Activated CD4-positive, alpha-beta T cell treated with anti-CD3 and anti-CD28 coated beads, Interleukin-2, amount 10 ng/mL, durations not matched to agents 24 days and 14 days (primary cell): ENCODE measurements at regions of chr11 and their contacts with region 1.

Region 1: GRCh38 chr11:111601979-111602864 is at the start of gene SIK2:
- DNase-seq: peak; percentile 96
- H3K4me3 Mint-ChIP-seq: peak within 1 kb of the TSS; percentile 90
- H3K27ac Mint-ChIP-seq: peak within 1 kb of the TSS; percentile 90
- H3K4me1 Mint-ChIP-seq: peaks cover 26% of the 10 kb centered on the region
- H3K27me3 Mint-ChIP-seq: peaks cover 9% of the 10 kb centered on the region
- total RNA-seq, gene SIK2: 8.2 and 9.0 TPM in 2 replicates

Region 2: GRCh38 chr11:111269146-111269868 is 332.9 kb before region 1 on chr11:
- intact Hi-C with region 1: no loop called
- DNase-seq: no peak
- H3K4me3 Mint-ChIP-seq: no peak overlapping the region
- H3K27ac Mint-ChIP-seq: no peak overlapping the region
- H3K4me1 Mint-ChIP-seq: peaks cover 6% of the 10 kb centered on the region
- H3K27me3 Mint-ChIP-seq: peaks cover 11% of the 10 kb centered on the region

Region 3: DNA sequence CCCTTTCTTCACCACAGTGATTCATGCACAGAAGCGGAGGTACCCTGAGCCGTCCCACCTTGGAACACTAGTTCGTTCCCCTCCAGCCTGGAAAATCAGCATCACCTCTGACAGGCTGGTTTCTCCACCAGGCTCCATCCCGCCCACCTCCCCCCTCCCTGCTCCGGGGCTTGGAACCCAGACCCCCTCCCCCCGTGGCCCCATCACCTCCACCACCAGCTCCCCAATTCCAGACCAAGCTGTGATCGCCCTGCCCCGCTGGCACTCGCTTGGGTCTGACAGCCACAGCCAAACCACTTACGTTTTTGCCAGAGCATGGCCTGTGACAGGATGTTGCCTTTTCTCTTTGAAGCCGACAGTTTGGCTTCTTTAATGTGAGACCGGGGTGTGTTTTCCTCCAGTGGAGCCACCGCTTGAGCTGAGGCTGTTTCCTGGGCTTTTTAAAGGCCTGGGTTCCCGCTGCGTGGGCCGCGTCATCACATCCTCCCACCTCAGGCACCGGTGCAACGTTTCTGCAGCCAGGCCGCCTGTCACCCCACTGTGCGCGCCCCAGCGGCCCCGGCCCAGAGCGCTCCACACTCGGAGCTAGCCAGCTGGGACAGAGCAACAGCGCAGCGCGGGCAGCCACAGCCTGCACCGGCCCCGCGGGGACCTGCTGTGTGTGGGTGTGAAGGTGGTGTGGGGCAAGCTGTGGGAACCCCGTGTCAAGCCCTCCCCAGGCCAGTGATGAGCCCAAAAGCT is 223.2 kb before region 1 on chr11 and contains the start of gene POU2AF1:
- intact Hi-C with region 1: loop called (anchors 5 kb)
- DNase-seq: peak; percentile 92
- H3K4me3 Mint-ChIP-seq: peak within 1 kb of the TSS; percentile 93
- H3K27ac Mint-ChIP-seq: peak within 1 kb of the TSS; percentile 99
- H3K4me1 Mint-ChIP-seq: peaks cover 61% of the 10 kb centered on the region
- H3K27me3 Mint-ChIP-seq: no peaks in the 10 kb centered on the region
- total RNA-seq, gene POU2AF1: 65.6 and 68.9 TPM in 2 replicates

Region 4: DNA sequence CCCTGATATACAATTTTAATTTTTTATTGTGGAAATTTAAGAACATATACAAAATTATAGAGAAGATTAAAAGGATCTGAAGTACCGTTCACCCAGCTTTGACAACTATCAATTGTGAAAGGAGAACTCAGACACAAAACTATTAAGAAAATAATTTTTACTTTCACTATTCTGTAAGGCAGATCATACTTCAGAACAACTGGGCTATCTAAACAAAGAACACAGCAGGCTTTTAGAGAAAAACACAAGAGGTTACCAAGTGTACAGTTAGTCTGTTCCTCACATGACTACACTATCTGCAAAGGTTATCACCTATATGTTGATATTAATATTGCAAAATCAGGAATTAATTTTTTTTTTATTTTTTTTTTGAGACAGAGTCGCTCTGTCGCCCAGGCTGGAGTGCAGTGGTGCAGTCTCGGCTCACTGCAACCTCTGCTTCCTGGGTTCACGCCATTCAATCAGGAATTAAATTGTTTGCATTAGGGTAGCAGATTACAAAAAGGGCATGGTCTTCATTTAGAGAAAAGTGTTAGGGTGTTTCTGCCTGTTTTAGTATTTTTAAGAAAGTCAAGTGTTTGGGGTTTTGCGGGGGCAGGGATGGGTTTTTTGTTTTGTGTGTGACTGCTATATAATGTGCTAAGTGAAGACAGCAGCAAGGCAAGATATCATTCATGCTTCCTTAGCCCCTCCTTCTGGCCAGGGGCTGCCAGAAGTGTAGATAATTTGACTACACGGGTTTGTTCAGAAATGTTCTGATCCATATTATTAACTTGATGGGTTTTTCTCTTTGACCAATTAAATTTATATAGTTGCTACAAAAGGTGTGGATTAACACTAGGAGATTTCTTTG is 27.6 kb before region 1 on chr11:
- intact Hi-C with region 1: no loop called
- DNase-seq: no peak
- H3K4me3 Mint-ChIP-seq: peak overlapping the region; percentile 14
- H3K27ac Mint-ChIP-seq: no peak overlapping the region
- H3K4me1 Mint-ChIP-seq: peaks cover 3% of the 10 kb centered on the region
- H3K27me3 Mint-ChIP-seq: peaks cover 14% of the 10 kb centered on the region

Region 5: DNA sequence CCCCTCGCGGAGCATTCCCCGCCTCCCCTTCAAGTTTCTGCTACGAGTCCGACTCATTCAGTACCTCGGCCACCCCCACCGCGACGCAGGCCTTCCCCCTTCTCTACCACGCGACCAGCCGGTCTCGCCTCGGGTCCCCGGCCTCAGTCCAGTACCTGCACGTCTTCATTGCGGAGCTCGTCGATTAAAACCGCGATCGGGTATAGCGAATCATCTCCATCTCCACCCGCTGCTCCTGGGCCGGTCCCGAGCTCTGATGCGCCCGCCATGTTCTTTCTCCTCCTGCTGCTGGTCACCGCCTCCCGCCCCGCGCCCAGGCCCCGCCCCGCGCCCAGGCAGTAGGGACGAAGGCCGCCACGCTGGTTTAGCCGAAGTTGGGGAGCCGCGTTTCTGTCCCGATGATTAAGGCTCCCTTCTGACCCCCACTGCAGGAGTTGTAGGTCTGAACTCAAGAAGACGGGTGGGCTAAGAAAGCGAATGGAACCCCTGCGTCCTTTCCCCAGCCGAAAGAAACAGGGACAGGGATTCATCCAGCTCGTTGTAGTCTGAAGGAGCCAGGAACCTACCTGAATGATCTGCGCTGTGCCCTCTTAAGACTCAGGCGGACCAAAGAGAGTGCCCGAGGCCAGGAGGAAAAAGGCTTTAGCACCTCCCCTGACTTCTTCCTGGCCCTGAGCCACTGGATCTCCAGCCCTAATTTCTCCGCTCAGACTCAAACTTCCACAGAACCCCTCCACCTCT is 164.0 kb after region 1 on chr11 and contains the start of gene PPP2R1B:
- intact Hi-C with region 1: loop called (anchors 1 kb)
- DNase-seq: peak; percentile 91
- H3K4me3 Mint-ChIP-seq: peak within 1 kb of the TSS; percentile 85
- H3K27ac Mint-ChIP-seq: peak within 1 kb of the TSS; percentile 98
- H3K4me1 Mint-ChIP-seq: peaks cover 31% of the 10 kb centered on the region
- H3K27me3 Mint-ChIP-seq: no peaks in the 10 kb centered on the region
- total RNA-seq, gene PPP2R1B: 63.2 and 63.6 TPM in 2 replicates

Region 6: GRCh38 chr11:111841370-111842053 is 239.3 kb after region 1 on chr11:
- intact Hi-C with region 1: loop called (anchors 1 kb)
- DNase-seq: peak; percentile 94
- H3K4me3 Mint-ChIP-seq: no peak overlapping the region
- H3K27ac Mint-ChIP-seq: no peak overlapping the region
- H3K4me1 Mint-ChIP-seq: peaks cover 9% of the 10 kb centered on the region
- H3K27me3 Mint-ChIP-seq: no peaks in the 10 kb centered on the region

Region 7: GRCh38 chr11:111878849-111879636 is 276.8 kb after region 1 on chr11 and contains the starts of genes CFAP68 and FDXACB1:
- intact Hi-C with region 1: loop called (anchors 1 kb)
- DNase-seq: peak; percentile 98
- H3K4me3 Mint-ChIP-seq: peak within 1 kb of the TSS; percentile 95
- H3K27ac Mint-ChIP-seq: peak within 1 kb of the TSS; percentile 99
- H3K4me1 Mint-ChIP-seq: peaks cover 10% of the 10 kb centered on the region
- H3K27me3 Mint-ChIP-seq: no peaks in the 10 kb centered on the region
- total RNA-seq, gene CFAP68: 22.6 and 25.5 TPM in 2 replicates
- total RNA-seq, gene FDXACB1: 8.8 and 10.0 TPM in 2 replicates

Region 8: DNA sequence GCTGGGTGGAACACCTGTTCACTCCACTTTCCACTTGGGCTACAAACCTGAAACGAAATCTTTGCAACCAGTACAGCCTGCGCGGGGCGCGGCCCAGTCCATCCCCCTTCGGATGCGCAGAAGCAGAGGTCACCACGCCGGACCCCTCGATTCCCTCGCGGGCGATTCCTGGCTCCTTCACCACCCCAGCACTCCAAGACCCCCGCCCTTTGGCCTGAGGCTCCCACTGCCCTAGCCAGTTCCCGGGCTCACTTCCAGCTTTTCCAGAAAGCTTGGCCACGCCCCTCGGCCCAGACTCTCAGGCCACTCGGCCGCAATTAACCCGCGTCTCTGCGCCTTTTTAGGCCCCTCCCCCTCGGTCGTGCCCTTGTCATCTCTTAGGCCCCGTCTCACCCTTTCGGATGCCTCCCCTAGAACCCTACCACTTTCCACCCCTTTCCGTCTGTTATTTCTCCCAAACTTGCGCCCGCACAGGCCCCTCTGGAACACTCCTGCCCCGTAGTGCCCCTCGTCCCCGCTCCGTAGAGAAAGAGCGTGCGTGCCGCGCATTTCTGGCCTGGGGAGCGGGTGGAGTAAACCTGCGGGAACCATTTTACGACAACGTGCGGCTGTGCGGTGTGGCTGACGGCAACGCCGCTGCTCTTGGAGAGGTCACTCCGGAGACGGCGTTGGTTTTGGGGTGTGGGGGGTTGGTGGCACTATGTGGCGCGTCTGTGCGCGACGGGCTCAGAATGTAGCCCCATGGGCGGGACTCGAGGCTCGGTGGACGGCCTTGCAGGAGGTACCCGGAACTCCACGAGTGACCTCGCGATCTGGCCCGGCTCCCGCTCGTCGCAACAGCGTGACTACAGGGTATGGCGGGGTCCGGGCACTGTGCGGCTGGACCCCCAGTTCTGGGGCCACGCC is 422.8 kb after region 1 on chr11 and contains the start of gene DLAT:
- intact Hi-C with region 1: loop called (anchors 2 kb)
- DNase-seq: peak; percentile 96
- H3K4me3 Mint-ChIP-seq: peak within 1 kb of the TSS; percentile 100
- H3K27ac Mint-ChIP-seq: peak within 1 kb of the TSS; percentile 100
- H3K4me1 Mint-ChIP-seq: peaks cover 16% of the 10 kb centered on the region
- H3K27me3 Mint-ChIP-seq: no peaks in the 10 kb centered on the region
- total RNA-seq, gene DLAT: 59.2 and 61.8 TPM in 2 replicates

Region 9: GRCh38 chr11:112086422-112087191 is 484.4 kb after region 1 on chr11 and contains the starts of genes SDHD and TIMM8B:
- intact Hi-C with region 1: loop called (anchors 2 kb)
- DNase-seq: peak; percentile 99
- H3K4me3 Mint-ChIP-seq: peak within 1 kb of the TSS; percentile 100
- H3K27ac Mint-ChIP-seq: peak within 1 kb of the TSS; percentile 99
- H3K4me1 Mint-ChIP-seq: peaks cover 52% of the 10 kb centered on the region
- H3K27me3 Mint-ChIP-seq: peaks cover 2% of the 10 kb centered on the region
- total RNA-seq, gene SDHD: 95.2 and 101 TPM in 2 replicates
- total RNA-seq, gene TIMM8B: 86.3 and 89.7 TPM in 2 replicates